SK-N-SH (cell line): ENCODE measurements at regions of chr22 and their contacts with region 1.

Region 1: DNA sequence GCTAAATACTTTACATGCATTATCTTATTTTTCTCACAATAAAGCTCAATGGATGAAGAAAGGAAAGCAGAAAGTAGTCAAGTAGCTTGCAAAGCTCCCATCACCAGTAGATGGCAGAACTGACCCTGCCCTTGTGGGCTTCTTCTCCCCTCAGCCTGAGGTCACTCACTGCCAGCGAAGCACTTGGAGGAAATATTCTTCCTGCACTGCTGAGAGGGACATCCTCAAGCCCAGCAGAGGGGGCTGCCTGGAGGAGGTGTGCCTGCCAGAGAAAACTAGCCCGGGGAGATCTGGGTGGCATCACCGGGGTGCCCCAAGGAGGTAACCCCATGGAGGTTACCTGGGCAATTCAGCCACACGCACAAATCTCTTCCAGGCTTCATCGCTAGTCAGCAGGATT is 6.6 kb downstream of the APOL4 start:
- DNase-seq: peak; percentile 57
- H3K4me3 ChIP-seq: no peak overlapping the region
- H3K27ac ChIP-seq: no peak overlapping the region; a peak in 1 of 4 replicates
- H3K4me1 ChIP-seq: peaks cover 10 to 40% of the 10 kb centered on the region in 2 experiments; a peak in 2 of 4 replicates
- H3K27me3 ChIP-seq: no peaks in the 10 kb centered on the region; the same call in 1 of the 2 replicates
- CTCF ChIP-seq: peak; percentile 78
- EP300 ChIP-seq: no peak
- RAD21 ChIP-seq: peak; percentile 85

Region 2: DNA sequence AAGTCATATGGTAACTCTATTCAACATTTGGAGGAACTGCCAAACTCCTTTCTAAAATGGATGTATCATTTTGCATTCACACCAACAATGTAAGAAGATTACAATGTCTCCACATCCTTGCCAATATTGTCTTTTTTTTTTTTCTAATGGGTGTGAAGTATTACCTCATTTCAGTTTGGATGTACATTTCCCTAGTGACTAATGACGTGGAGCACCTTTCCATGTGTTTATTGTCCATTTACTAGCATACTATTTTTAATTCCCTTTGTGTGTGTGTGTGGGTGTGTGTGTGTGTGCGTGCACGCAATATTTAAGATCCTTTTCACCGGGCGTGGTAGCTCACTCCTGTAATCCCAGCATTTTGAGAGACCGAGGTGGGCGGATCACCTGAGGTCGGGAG is 97.1 kb before region 1 on chr22:
- CTCF ChIA-PET with region 1: no interaction called
- POLR2A ChIA-PET with region 1: no interaction called
- DNase-seq: no peak
- H3K4me3 ChIP-seq: no peak overlapping the region
- H3K27ac ChIP-seq: no peak overlapping the region
- H3K4me1 ChIP-seq: no peaks in the 10 kb centered on the region
- H3K27me3 ChIP-seq: no peaks in the 10 kb centered on the region
- CTCF ChIP-seq: no peak
- EP300 ChIP-seq: no peak
- RAD21 ChIP-seq: no peak

Region 3: DNA sequence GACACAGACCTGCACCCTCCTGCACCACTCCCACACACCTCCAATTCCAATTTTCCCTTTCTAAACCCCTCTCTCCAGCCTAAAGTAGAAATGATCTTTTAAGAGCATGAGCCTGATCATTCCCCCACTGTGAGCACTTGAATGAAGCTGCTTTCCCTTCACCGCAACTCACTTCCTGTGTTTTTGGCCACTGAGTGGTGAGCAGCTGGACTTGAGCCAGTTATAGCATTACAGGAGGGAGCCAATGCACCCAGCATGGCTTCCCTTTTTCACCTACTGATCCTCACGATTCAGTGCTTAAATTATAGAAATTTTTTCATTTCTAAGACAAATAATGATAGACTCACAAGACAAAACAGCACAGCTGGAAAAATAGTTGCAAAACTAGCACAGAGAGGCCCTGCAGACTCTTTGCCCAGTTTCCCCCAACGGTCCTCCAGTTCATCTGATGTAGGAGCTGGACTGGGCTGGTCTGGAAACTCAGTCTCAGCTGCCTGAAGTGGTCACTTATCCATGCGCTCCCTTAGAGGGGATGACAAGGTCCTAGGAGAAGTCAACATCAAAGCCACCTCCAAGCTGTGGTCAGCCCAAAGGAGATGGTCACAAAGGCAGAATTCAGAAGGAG is 16.4 kb after region 1 on chr22:
- CTCF ChIA-PET with region 1: interaction called, 15 read pairs
- POLR2A ChIA-PET with region 1: no interaction called
- DNase-seq: no peak
- H3K4me3 ChIP-seq: no peak overlapping the region
- H3K27ac ChIP-seq: no peak overlapping the region
- H3K4me1 ChIP-seq: no peaks in the 10 kb centered on the region
- H3K27me3 ChIP-seq: peaks cover 21% of the 10 kb centered on the region; the same call in 1 of the 2 replicates
- CTCF ChIP-seq: no peak
- EP300 ChIP-seq: no peak
- RAD21 ChIP-seq: no peak

Region 4: DNA sequence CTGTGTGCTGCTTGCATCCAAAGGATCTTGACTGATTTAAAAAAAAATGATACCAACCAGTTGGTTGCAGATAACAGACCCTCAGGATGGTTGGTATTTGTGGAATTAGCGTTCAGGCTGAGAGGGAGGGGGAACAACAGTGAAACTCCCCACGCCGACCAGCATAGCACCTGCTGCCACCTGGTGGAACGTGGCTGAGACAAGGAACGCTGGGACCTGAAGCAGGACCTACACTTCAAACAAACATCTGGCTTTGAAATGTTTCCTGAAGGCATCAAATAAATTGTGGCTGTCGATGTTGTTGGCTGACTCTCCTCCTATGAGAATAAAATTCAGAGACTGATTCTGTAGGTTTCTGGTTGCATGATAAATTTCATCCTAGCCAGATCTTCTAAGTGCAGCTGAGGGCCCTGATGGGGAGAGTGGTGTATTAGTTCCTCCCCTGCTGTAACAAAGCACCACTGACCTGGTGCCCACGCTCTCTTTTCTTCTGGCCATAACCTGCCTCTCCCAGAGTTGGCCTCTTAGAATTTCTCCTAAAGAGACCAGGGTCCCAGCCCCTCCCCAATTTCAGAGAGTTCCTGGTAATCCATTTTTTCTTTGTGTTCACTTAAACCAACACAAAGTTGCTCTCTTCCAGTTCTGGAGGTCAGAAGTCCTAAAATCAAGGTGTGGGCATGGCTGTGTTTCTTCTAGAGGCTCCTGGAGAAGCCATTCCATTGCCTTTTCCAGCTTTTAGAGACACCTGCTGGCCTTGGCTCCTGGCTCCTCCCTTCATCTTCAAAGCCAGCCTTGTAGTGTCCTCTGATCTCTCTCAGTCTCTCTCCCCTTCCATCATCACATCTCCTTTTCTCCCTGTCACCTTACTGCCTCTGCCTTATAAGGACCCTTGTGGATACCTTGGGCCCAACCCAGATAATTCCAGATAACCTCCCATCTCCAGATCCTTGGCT is 27.1 kb after region 1 on chr22:
- CTCF ChIA-PET with region 1: interaction called, 14 read pairs
- POLR2A ChIA-PET with region 1: no interaction called
- DNase-seq: peak; percentile 57
- H3K4me3 ChIP-seq: no peak overlapping the region
- H3K27ac ChIP-seq: no peak overlapping the region
- H3K4me1 ChIP-seq: peaks cover 0 to 7% of the 10 kb centered on the region in 2 experiments; a peak in 1 of 4 replicates
- H3K27me3 ChIP-seq: peaks cover 7% of the 10 kb centered on the region; the same call in 1 of the 2 replicates
- CTCF ChIP-seq: peak; percentile 66
- EP300 ChIP-seq: no peak
- RAD21 ChIP-seq: peak; percentile 67

Region 5: GRCh38 chr22:36227386-36227785 is 32.4 kb after region 1 on chr22:
- CTCF ChIA-PET with region 1: interaction called, 10 read pairs
- POLR2A ChIA-PET with region 1: no interaction called
- DNase-seq: no peak
- H3K4me3 ChIP-seq: no peak overlapping the region
- H3K27ac ChIP-seq: no peak overlapping the region
- H3K4me1 ChIP-seq: no peaks in the 10 kb centered on the region
- H3K27me3 ChIP-seq: no peaks in the 10 kb centered on the region
- CTCF ChIP-seq: no peak
- EP300 ChIP-seq: no peak
- RAD21 ChIP-seq: no peak

Region 6: GRCh38 chr22:36239401-36240171 is 44.6 kb after region 1 on chr22 and contains the start of gene APOL2:
- CTCF ChIA-PET with region 1: interaction called, 28 read pairs
- POLR2A ChIA-PET with region 1: interaction called, 11 read pairs
- DNase-seq: peak; percentile 85
- H3K4me3 ChIP-seq: peak within 1 kb of the TSS; percentile 61 to 79
- H3K27ac ChIP-seq: peak within 1 kb of the TSS; percentile 79 to 91
- H3K4me1 ChIP-seq: peaks cover 10 to 25% of the 10 kb centered on the region in 2 experiments; a peak in 1 of 4 replicates
- H3K27me3 ChIP-seq: no peaks in the 10 kb centered on the region
- CTCF ChIP-seq: peak; percentile 65
- EP300 ChIP-seq: no peak
- RAD21 ChIP-seq: peak; percentile 66
- polyA plus RNA-seq, gene APOL2: 8.3 and 9.4 TPM in 2 replicates

Region 7: GRCh38 chr22:36277482-36278291 is 82.7 kb after region 1 on chr22:
- CTCF ChIA-PET with region 1: interaction called, 14 read pairs
- POLR2A ChIA-PET with region 1: no interaction called
- DNase-seq: peak; percentile 84
- H3K4me3 ChIP-seq: no peak overlapping the region
- H3K27ac ChIP-seq: no peak overlapping the region
- H3K4me1 ChIP-seq: no peaks in the 10 kb centered on the region; a peak in 1 of 4 replicates
- H3K27me3 ChIP-seq: no peaks in the 10 kb centered on the region
- CTCF ChIP-seq: peak; percentile 70
- EP300 ChIP-seq: no peak
- RAD21 ChIP-seq: peak; percentile 74